BJ (cell line): ENCODE measurements at regions of chr19 and their contacts with region 1.

Region 1: GRCh38 chr19:32976208-32976805 is 4.3 kb downstream of the FAAP24 start:
- DNase-seq: no peak
- H3K4me3 ChIP-seq: no peak overlapping the region
- H3K27me3 ChIP-seq: no peaks in the 10 kb centered on the region
- CTCF ChIP-seq: peak; percentile 86

Region 2: GRCh38 chr19:32988724-32989123 is 12.4 kb after region 1 on chr19:
- CTCF ChIA-PET with region 1: interaction called, 17 read pairs
- POLR2A ChIA-PET with region 1: no interaction called
- DNase-seq: no peak
- H3K4me3 ChIP-seq: no peak overlapping the region
- H3K27me3 ChIP-seq: no peaks in the 10 kb centered on the region
- CTCF ChIP-seq: no peak

Region 3: GRCh38 chr19:33114302-33114701 is 138.0 kb after region 1 on chr19:
- CTCF ChIA-PET with region 1: interaction called, 21 read pairs
- POLR2A ChIA-PET with region 1: no interaction called
- DNase-seq: no peak
- H3K4me3 ChIP-seq: no peak overlapping the region
- H3K27me3 ChIP-seq: no peaks in the 10 kb centered on the region
- CTCF ChIP-seq: no peak

Region 4: GRCh38 chr19:33125929-33126388 is 149.7 kb after region 1 on chr19:
- CTCF ChIA-PET with region 1: interaction called, 17 read pairs
- POLR2A ChIA-PET with region 1: no interaction called
- DNase-seq: no peak
- H3K4me3 ChIP-seq: no peak overlapping the region
- H3K27me3 ChIP-seq: no peaks in the 10 kb centered on the region
- CTCF ChIP-seq: peak; percentile 88